Caco-2 (cell line): ENCODE measurements at regions of chr11 and their contacts with region 1.

Region 1: DNA sequence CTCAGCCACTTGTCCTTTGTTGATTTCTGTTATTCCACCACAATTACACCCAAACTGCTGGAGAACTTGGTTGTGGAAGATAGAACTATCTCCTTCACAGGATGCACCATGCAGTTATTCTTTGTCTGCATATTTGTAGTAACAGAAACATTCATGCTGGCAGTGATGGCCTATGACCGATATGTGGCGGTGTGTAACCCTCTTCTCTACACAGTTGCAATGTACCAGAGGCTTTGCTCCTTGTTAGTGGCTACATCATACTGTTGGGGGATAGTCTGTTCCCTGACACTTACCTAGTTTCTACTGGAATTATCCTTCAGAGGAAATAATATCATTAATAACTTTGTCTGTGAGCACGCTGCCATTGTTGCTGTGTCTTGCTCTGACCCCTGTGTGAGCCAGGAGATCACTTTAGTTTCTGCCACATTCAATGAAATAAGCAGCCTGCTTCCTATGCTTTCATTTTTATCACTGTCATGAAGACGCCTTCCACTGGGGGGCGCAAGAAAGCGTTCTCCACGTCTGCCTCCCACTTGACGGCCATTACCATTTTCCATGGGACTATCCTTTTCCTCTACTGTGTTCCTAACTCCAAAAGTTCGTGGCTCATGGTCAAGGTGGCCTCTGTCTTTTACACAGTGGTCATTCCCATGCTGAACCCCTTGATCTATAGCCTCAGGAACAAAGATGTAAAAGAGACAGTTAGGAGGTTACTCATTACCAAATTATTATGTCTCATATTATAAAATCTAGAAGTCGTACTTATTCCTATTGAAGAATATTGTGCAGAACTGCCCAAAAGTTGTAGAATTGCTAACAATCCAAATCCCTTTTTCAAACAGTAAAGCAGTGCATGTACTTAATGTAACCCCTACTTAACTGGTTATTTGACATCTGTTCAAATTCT is 53.2 kb downstream of the OR4C6 start:
- DNase-seq: peak in 1 of 2 experiments; percentile 64
- H3K4me3 ChIP-seq: no peak overlapping the region
- H3K4me3 Mint-ChIP-seq: no peak overlapping the region
- H3K27ac Mint-ChIP-seq: no peak overlapping the region
- H3K4me1 ChIP-seq: no peaks in the 10 kb centered on the region
- H3K4me1 Mint-ChIP-seq: no peaks in the 10 kb centered on the region
- H3K27me3 ChIP-seq: no peaks in the 10 kb centered on the region
- H3K27me3 Mint-ChIP-seq: no peaks in the 10 kb centered on the region
- CTCF ChIP-seq: peak; percentile 35 to 54

Region 2: DNA sequence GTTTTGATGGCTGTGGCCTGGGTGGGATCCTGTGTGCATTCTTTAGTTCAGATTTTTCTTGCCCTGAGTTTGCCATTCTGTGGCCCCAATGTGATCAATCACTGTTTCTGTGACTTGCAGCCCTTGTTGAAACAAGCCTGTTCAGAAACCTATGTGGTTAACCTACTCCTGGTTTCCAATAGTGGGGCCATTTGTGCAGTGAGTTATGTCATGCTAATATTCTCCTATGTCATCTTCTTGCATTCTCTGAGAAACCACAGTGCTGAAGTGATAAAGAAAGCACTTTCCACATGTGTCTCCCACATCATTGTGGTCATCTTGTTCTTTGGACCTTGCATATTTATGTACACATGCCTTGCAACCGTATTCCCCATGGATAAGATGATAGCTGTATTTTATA is 142.7 kb before region 1 on chr11:
- CTCF ChIA-PET with region 1: no interaction called
- POLR2A ChIA-PET with region 1: no interaction called
- intact Hi-C with region 1: no loop called
- DNase-seq: no peak
- H3K4me3 ChIP-seq: no peak overlapping the region
- H3K4me3 Mint-ChIP-seq: no peak overlapping the region
- H3K27ac Mint-ChIP-seq: no peak overlapping the region
- H3K4me1 ChIP-seq: no peaks in the 10 kb centered on the region
- H3K4me1 Mint-ChIP-seq: no peaks in the 10 kb centered on the region
- H3K27me3 ChIP-seq: no peaks in the 10 kb centered on the region
- H3K27me3 Mint-ChIP-seq: no peaks in the 10 kb centered on the region
- CTCF ChIP-seq: no peak

Region 3: DNA sequence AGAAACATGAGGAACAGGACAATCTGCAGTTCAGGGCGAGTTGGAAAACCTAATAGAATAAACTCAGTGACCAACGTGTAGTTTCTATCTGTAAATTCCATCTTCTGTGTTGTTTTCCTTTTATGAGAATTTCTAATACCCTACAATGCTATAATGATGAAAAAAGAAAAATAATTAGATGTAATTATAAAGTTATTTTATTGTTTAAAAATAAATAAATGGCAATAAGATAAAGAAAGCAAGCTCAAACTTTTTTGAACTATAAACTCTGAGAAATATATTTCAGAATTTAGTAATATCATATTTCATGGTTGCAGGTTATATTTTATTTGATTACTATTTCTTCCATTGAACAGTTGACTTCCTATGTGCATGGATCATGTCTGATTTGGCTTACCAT is 221.1 kb after region 1 on chr11 and contains the start of gene OR5I1:
- CTCF ChIA-PET with region 1: no interaction called
- POLR2A ChIA-PET with region 1: no interaction called
- intact Hi-C with region 1: loop called (anchors 5 kb)
- DNase-seq: no peak
- H3K4me3 ChIP-seq: no peak within 1 kb of the TSS
- H3K4me3 Mint-ChIP-seq: no peak within 1 kb of the TSS
- H3K27ac Mint-ChIP-seq: no peak within 1 kb of the TSS
- H3K4me1 ChIP-seq: no peaks in the 10 kb centered on the region
- H3K4me1 Mint-ChIP-seq: no peaks in the 10 kb centered on the region
- H3K27me3 ChIP-seq: no peaks in the 10 kb centered on the region; the same call in 1 of the 2 replicates
- H3K27me3 Mint-ChIP-seq: peaks cover 2% of the 10 kb centered on the region
- CTCF ChIP-seq: no peak
- total RNA-seq, gene OR5I1: not detected in 2 replicates